ENCODE measurements at regions of chr1 and their contacts with region 1.

Region 1: GRCh38 chr1:193059268-193060225 is at the starts of genes RO60 and UCHL5:
- DNase-seq: peak; percentile 96
- ATAC-seq: peak; percentile 95
- H3K4me3 ChIP-seq: peak within 1 kb of the TSS; percentile 62 to 99 (median 91)
- H3K4me3 Mint-ChIP-seq: peak within 1 kb of the TSS; percentile 98
- H3K27ac ChIP-seq: peak within 1 kb of the TSS; percentile 89 to 94
- H3K27ac Mint-ChIP-seq: peak within 1 kb of the TSS; percentile 99
- H3K4me1 ChIP-seq: peaks cover 21 to 25% of the 10 kb centered on the region in 2 donors
- H3K4me1 Mint-ChIP-seq: peaks cover 51% of the 10 kb centered on the region
- H3K27me3 ChIP-seq: no peaks in the 10 kb centered on the region
- H3K27me3 Mint-ChIP-seq: no peaks in the 10 kb centered on the region
- CTCF ChIP-seq: no peak
- total RNA-seq, gene RO60: 66.4 and 78.2 TPM in 2 replicates
- total RNA-seq, gene UCHL5: 31.5 and 32.9 TPM in 2 replicates

Region 2: GRCh38 chr1:193104906-193105820 is 45.6 kb after region 1 on chr1 and contains the start of gene GLRX2:
- CTCF ChIA-PET with region 1: interaction called, 3 read pairs
- POLR2A ChIA-PET with region 1: no interaction called
- intact Hi-C with region 1: loop called (anchors 1 kb)
- DNase-seq: peak; percentile 65
- ATAC-seq: peak; percentile 83
- H3K4me3 ChIP-seq: peak within 1 kb of the TSS; percentile 62 to 99 (median 78)
- H3K4me3 Mint-ChIP-seq: peak within 1 kb of the TSS; percentile 97
- H3K27ac ChIP-seq: peak within 1 kb of the TSS in 1 of 2 donors; percentile 71
- H3K27ac Mint-ChIP-seq: peak within 1 kb of the TSS; percentile 83
- H3K4me1 ChIP-seq: peaks cover 8 to 13% of the 10 kb centered on the region in 2 donors
- H3K4me1 Mint-ChIP-seq: peaks cover 22% of the 10 kb centered on the region
- H3K27me3 ChIP-seq: no peaks in the 10 kb centered on the region
- H3K27me3 Mint-ChIP-seq: no peaks in the 10 kb centered on the region
- CTCF ChIP-seq: no peak
- total RNA-seq, gene GLRX2: 12.9 and 13.9 TPM in 2 replicates

Region 3: GRCh38 chr1:193270996-193271395 is 211.4 kb after region 1 on chr1:
- CTCF ChIA-PET with region 1: no interaction called
- POLR2A ChIA-PET with region 1: no interaction called
- intact Hi-C with region 1: no loop called
- DNase-seq: peak; percentile 9
- ATAC-seq: no peak
- H3K4me3 ChIP-seq: no peak overlapping the region
- H3K4me3 Mint-ChIP-seq: no peak overlapping the region
- H3K27ac ChIP-seq: no peak overlapping the region
- H3K27ac Mint-ChIP-seq: no peak overlapping the region
- H3K4me1 ChIP-seq: no peaks in the 10 kb centered on the region
- H3K4me1 Mint-ChIP-seq: peaks cover 14% of the 10 kb centered on the region
- H3K27me3 ChIP-seq: no peaks in the 10 kb centered on the region
- H3K27me3 Mint-ChIP-seq: peaks cover 9% of the 10 kb centered on the region
- CTCF ChIP-seq: no peak

Region 4: DNA sequence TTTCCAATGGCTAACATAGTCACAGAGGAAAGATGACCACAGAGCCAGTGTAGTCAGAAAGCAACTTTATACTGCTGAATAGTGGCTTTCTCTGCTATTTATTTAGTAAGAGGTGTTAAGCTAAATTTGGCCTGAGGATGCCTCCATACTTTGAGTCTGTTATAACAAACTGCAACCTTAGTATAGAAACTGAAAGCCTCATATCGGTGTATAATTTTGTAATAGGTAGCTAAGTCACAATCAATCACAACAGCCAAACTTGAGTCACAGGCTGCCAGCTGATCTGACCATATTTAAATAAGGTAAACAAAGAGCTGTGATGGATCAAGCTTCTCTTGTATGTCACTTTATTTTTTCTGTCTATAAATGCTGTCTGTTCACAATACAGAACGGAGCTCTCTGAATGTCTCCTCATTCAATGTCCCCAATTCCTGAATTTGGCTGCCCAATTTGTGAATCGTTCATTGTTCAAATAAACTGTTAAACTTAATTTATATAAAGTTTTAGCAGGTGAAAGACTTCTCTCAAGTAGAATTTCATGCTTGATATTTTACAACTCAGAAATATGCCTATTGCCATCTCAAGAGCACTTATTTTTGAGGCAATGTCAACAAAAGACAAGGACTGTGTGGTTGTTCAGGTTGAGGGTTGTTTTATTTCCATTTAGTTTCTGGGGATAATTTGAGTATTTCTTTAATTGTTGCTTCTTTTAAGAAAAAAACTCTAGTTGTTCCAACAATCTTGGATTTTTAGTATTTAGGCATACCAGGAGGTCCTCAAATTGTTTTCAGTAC is 466.6 kb after region 1 on chr1:
- CTCF ChIA-PET with region 1: no interaction called
- POLR2A ChIA-PET with region 1: no interaction called
- intact Hi-C with region 1: no loop called
- DNase-seq: no peak
- ATAC-seq: no peak
- H3K4me3 ChIP-seq: no peak overlapping the region
- H3K4me3 Mint-ChIP-seq: no peak overlapping the region
- H3K27ac ChIP-seq: no peak overlapping the region
- H3K27ac Mint-ChIP-seq: no peak overlapping the region
- H3K4me1 ChIP-seq: no peaks in the 10 kb centered on the region
- H3K4me1 Mint-ChIP-seq: no peaks in the 10 kb centered on the region
- H3K27me3 ChIP-seq: no peaks in the 10 kb centered on the region
- H3K27me3 Mint-ChIP-seq: peaks cover 3% of the 10 kb centered on the region
- CTCF ChIP-seq: no peak

Region 5: GRCh38 chr1:194289569-194290266 is 1230.2 kb after region 1 on chr1:
- CTCF ChIA-PET with region 1: no interaction called
- POLR2A ChIA-PET with region 1: no interaction called
- intact Hi-C with region 1: loop called (anchors 2 kb)
- DNase-seq: peak; percentile 91
- ATAC-seq: peak; percentile 93
- H3K4me3 ChIP-seq: peak overlapping the region in 1 of 5 experiments; percentile 8
- H3K4me3 Mint-ChIP-seq: peak overlapping the region; percentile 27
- H3K27ac ChIP-seq: no peak overlapping the region
- H3K27ac Mint-ChIP-seq: peak overlapping the region; percentile 78
- H3K4me1 ChIP-seq: peaks cover 10% of the 10 kb centered on the region in 2 donors
- H3K4me1 Mint-ChIP-seq: peaks cover 20% of the 10 kb centered on the region
- H3K27me3 ChIP-seq: peaks cover 0 to 9% (median 2%) of the 10 kb centered on the region in 4 experiments
- H3K27me3 Mint-ChIP-seq: peaks cover 3% of the 10 kb centered on the region
- CTCF ChIP-seq: no peak

Measured in B cell (primary cell).